GM13976 (cell line): ENCODE measurements at regions of chr2 and their contacts with region 1.

Region 1: GRCh38 chr2:225889446-225889850 is 489.9 kb downstream of the NYAP2 start:
- DNase-seq: peak; percentile 16
- CTCF ChIP-seq: peak; percentile 36

Region 2: GRCh38 chr2:225471482-225471881 is 418.0 kb before region 1 on chr2:
- in situ Hi-C with region 1: no loop called
- DNase-seq: no peak
- CTCF ChIP-seq: no peak

Region 3: GRCh38 chr2:226800941-226801784 is 911.7 kb after region 1 on chr2:
- in situ Hi-C with region 1: loop called (anchors 10 kb)
- DNase-seq: peak; percentile 85
- CTCF ChIP-seq: no peak